PC-3 (cell line): ENCODE measurements at regions of chr16 and their contacts with region 1.

Region 1: GRCh38 chr16:24041826-24042631 is 206.2 kb downstream of the PRKCB start:
- DNase-seq: peak; percentile 71
- ATAC-seq: peak; percentile 66
- H3K4me3 ChIP-seq: no peak overlapping the region
- H3K27ac ChIP-seq: no peak overlapping the region
- H3K4me1 ChIP-seq: no peaks in the 10 kb centered on the region
- H3K27me3 ChIP-seq: no peaks in the 10 kb centered on the region
- CTCF ChIP-seq: peak; percentile 78

Region 2: GRCh38 chr16:24013733-24014645 is 28.0 kb before region 1 on chr16:
- CTCF ChIA-PET with region 1: no interaction called
- POLR2A ChIA-PET with region 1: no interaction called
- intact Hi-C with region 1: no loop called
- DNase-seq: no peak
- ATAC-seq: no peak
- H3K4me3 ChIP-seq: no peak overlapping the region
- H3K27ac ChIP-seq: no peak overlapping the region
- H3K4me1 ChIP-seq: no peaks in the 10 kb centered on the region
- H3K27me3 ChIP-seq: no peaks in the 10 kb centered on the region
- CTCF ChIP-seq: no peak

Region 3: DNA sequence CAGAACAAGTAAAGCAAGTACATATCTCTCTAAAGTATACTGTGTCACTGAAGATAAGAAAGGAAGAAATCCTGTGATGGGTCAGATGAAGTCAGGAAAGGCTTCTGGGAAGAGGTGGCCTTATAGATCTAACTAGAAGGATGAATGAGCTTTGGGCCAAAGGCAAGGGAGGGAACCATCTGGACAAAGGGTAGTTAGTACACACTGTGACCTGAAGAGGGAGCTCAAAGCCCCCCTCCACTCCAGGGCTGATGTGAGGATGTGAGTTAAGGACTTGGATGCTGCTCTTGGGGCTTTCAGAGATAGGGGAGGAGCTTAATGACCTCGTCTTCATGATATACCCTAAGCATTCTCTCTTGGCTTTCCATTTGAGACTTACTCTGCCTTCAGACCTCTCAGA is 28.8 kb after region 1 on chr16:
- CTCF ChIA-PET with region 1: interaction called, 10 read pairs
- POLR2A ChIA-PET with region 1: no interaction called
- intact Hi-C with region 1: no loop called
- DNase-seq: peak; percentile 42
- ATAC-seq: 0 out of 2 replicates have a peak, but pooled peaks have one; percentile 45
- H3K4me3 ChIP-seq: no peak overlapping the region
- H3K27ac ChIP-seq: no peak overlapping the region
- H3K4me1 ChIP-seq: no peaks in the 10 kb centered on the region
- H3K27me3 ChIP-seq: peaks cover 17% of the 10 kb centered on the region
- CTCF ChIP-seq: peak; percentile 57

Region 4: DNA sequence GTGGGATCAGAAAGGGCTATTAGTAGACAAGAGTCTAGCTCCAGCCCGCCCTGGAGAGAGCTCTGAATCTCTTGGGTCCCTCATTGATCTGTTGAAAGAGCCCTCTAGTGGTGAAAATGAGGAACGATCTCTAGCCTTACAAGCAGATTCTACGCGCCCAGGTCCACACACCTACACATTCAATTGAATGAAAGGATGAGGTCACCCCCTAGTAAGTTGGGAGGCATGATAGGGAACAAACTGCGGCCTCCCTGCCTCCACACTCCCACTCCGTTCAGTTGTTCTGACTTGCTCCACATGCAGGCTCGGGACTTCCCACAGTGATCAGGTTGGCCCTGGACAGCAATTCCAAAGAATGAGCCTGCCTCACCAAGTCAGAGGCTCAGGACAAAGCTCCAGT is 211.2 kb after region 1 on chr16:
- CTCF ChIA-PET with region 1: no interaction called
- POLR2A ChIA-PET with region 1: no interaction called
- intact Hi-C with region 1: loop called (anchors 2 kb)
- DNase-seq: peak; percentile 51
- ATAC-seq: peak; percentile 48
- H3K4me3 ChIP-seq: no peak overlapping the region
- H3K27ac ChIP-seq: no peak overlapping the region
- H3K4me1 ChIP-seq: no peaks in the 10 kb centered on the region
- H3K27me3 ChIP-seq: peaks cover 16% of the 10 kb centered on the region
- CTCF ChIP-seq: peak; percentile 60

Region 5: DNA sequence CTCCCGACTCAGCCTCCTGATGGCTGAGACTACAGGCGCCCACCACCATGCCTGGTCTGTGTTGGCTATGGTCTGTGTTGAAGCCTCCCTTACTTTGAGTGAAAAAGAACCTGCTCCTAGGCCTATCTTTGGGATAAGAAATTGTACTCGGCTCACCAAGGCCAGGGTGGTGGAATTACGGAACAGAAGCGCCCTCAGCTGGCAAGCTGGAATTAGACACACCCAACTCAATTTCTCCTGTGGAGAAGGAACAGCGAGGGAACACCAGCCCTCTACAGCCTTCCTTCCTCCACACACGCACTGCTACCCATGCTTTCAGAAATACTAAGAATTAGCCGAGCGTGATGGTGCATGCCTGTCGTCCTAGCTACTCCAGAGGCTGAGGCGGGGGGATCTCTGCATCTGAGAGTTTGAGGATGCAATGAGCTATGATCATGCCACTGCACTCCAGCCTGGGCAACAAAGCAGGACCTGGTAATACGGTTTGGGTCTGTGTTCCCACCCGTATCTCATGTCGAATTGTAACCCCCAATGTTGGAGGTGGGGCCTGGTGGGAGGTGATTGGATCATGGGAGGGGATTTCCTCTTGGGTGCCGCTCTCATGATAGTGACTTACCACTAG is 457.3 kb after region 1 on chr16:
- CTCF ChIA-PET with region 1: interaction called, 3 read pairs
- POLR2A ChIA-PET with region 1: no interaction called
- intact Hi-C with region 1: loop called (anchors 1 kb)
- DNase-seq: peak; percentile 56
- ATAC-seq: peak; percentile 84
- H3K4me3 ChIP-seq: no peak overlapping the region
- H3K27ac ChIP-seq: no peak overlapping the region
- H3K4me1 ChIP-seq: no peaks in the 10 kb centered on the region
- H3K27me3 ChIP-seq: no peaks in the 10 kb centered on the region
- CTCF ChIP-seq: peak; percentile 71